PC-9 (cell line): ENCODE measurements at regions of chr7 and their contacts with region 1.

Region 1: GRCh38 chr7:127585044-127585953 is at the start of gene GCC1:
- DNase-seq: peak; percentile 69 to 96
- H3K4me3 ChIP-seq: peak within 1 kb of the TSS; percentile 87
- H3K27ac ChIP-seq: peak within 1 kb of the TSS; percentile 52
- H3K4me1 ChIP-seq: peaks cover 31% of the 10 kb centered on the region
- H3K27me3 ChIP-seq: no peaks in the 10 kb centered on the region
- CTCF ChIP-seq: no peak
- total RNA-seq, gene GCC1: 25.2 and 27.0 TPM in 2 replicates

Region 2: DNA sequence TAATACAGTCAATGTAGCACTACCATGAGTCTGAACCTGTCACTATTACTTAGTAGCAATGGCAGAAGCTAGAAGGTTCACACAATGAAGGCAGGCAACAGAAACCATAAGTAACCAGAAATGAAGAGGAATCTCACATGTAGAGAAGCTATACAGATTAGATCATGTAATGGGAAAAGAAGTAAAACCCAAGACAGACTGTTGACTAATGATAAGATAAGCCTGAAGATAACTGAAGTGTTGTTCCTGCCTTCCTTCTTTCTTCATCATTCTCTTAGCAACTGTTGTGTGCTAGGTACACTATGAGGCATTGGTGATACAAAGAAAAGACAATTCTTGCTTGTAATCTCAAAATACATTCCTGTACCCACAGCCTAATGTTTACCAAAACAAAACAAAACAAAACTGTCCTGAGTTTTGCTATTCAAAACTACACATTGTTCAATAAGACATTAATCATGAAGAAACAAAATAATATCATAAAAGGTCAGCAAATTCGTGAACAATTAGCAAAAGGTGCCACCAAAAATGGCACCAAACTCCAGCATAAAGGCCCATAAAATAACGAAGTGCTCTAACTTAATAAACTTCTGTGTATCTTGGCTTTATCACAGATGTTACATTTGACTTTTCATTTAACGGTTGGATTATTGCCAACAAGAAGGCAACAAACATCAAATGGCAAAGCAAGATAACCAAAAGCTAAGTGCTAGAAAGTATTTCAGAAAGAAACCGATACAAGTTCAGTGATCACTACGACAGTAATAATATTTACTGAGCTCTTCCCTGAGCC is 219.9 kb before region 1 on chr7:
- CTCF ChIA-PET with region 1: no interaction called
- POLR2A ChIA-PET with region 1: no interaction called
- intact Hi-C with region 1: no loop called
- DNase-seq: no peak
- H3K4me3 ChIP-seq: no peak overlapping the region
- H3K27ac ChIP-seq: no peak overlapping the region
- H3K4me1 ChIP-seq: no peaks in the 10 kb centered on the region
- H3K27me3 ChIP-seq: no peaks in the 10 kb centered on the region
- CTCF ChIP-seq: no peak

Region 3: GRCh38 chr7:127392566-127393367 is 192.5 kb before region 1 on chr7 and contains the start of gene ZNF800:
- CTCF ChIA-PET with region 1: interaction called, 10 read pairs
- POLR2A ChIA-PET with region 1: interaction called, 7 read pairs
- intact Hi-C with region 1: loop called (anchors 2 kb)
- DNase-seq: peak; percentile 58 to 90
- H3K4me3 ChIP-seq: peak within 1 kb of the TSS; percentile 99
- H3K27ac ChIP-seq: peak within 1 kb of the TSS; percentile 54
- H3K4me1 ChIP-seq: peaks cover 22% of the 10 kb centered on the region
- H3K27me3 ChIP-seq: no peaks in the 10 kb centered on the region
- CTCF ChIP-seq: no peak
- total RNA-seq, gene ZNF800: 32.4 and 32.6 TPM in 2 replicates

Region 4: GRCh38 chr7:127525866-127526480 is 59.3 kb before region 1 on chr7:
- CTCF ChIA-PET with region 1: no interaction called
- POLR2A ChIA-PET with region 1: no interaction called
- intact Hi-C with region 1: no loop called
- DNase-seq: no peak
- H3K4me3 ChIP-seq: no peak overlapping the region
- H3K27ac ChIP-seq: no peak overlapping the region
- H3K4me1 ChIP-seq: no peaks in the 10 kb centered on the region
- H3K27me3 ChIP-seq: peaks cover 19% of the 10 kb centered on the region; the same call in 1 of the 2 replicates
- CTCF ChIP-seq: no peak

Region 5: DNA sequence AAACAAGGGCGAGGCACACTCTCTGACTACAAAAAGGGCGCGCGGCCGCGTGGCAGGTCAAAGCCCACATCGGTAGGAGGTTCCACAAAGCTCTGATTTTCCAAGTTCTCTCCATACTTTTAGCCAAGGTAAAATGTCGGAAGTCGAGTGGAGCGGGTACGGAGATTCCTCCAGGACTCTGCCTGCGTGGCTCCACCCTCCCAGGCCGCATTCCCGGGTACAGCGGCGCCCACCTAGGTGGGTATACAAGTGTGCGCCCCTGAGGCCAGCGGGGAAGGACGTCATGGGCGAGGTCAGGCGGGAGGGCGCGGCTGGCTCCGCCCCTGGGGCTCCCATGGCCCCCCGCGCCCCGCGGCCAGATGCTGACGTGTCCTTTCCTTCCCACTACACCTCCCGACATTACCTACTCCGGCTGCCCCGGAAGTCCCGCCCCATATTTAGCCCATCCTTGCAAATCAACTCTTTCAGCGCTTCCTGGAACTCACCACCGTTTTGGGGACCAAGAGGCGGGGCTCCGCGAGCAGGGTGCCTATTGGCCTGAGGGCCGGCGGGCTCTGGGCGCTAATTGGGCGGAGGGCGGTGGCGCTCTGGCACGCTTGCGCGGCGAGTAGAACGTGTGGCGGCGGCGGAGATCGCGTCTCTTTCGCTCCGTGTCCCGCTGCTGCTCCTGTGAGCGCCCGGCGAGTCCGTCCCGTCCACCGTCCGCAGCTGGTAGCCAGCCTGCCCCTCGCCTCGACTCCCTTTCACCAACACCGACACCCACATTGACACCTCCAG is 66.4 kb after region 1 on chr7 and contains the start of gene SND1:
- CTCF ChIA-PET with region 1: no interaction called
- POLR2A ChIA-PET with region 1: no interaction called
- intact Hi-C with region 1: loop called (anchors 1 kb)
- DNase-seq: peak; percentile 98 to 100
- H3K4me3 ChIP-seq: peak within 1 kb of the TSS; percentile 86
- H3K27ac ChIP-seq: peak within 1 kb of the TSS; percentile 90
- H3K4me1 ChIP-seq: peaks cover 27% of the 10 kb centered on the region
- H3K27me3 ChIP-seq: no peaks in the 10 kb centered on the region
- CTCF ChIP-seq: no peak
- total RNA-seq, gene SND1: 219 and 273 TPM in 2 replicates

Region 6: GRCh38 chr7:127683776-127684681 is 98.7 kb after region 1 on chr7:
- CTCF ChIA-PET with region 1: interaction called, 11 read pairs
- POLR2A ChIA-PET with region 1: no interaction called
- intact Hi-C with region 1: no loop called
- DNase-seq: no peak
- H3K4me3 ChIP-seq: no peak overlapping the region
- H3K27ac ChIP-seq: no peak overlapping the region
- H3K4me1 ChIP-seq: no peaks in the 10 kb centered on the region
- H3K27me3 ChIP-seq: no peaks in the 10 kb centered on the region
- CTCF ChIP-seq: no peak

Region 7: GRCh38 chr7:127911968-127912511 is 326.7 kb after region 1 on chr7:
- CTCF ChIA-PET with region 1: no interaction called
- POLR2A ChIA-PET with region 1: no interaction called
- intact Hi-C with region 1: no loop called
- DNase-seq: no peak
- H3K4me3 ChIP-seq: no peak overlapping the region
- H3K27ac ChIP-seq: no peak overlapping the region
- H3K4me1 ChIP-seq: no peaks in the 10 kb centered on the region
- H3K27me3 ChIP-seq: no peaks in the 10 kb centered on the region
- CTCF ChIP-seq: no peak

Region 8: DNA sequence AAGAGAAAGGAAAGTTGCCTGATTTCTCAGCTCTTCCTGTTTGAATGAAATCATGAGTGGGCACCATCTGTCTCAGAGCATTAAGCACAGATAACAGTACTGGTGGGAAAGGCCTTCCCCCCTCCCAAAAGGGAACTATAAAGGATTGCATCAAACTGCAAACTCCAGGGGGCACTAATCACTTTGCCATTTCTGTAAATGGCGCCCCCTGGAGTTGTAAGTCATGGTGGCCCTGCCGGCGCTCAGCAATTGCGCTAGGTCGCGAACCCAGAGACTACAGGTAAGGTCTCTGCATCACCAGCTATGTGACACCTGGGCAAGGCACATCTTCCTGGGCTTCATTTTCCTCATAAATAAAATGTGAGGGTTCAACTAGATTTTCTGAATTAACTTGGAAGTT is 434.9 kb after region 1 on chr7:
- CTCF ChIA-PET with region 1: no interaction called
- POLR2A ChIA-PET with region 1: interaction called, 3 read pairs
- intact Hi-C with region 1: loop called (anchors 5 kb)
- DNase-seq: no peak
- H3K4me3 ChIP-seq: no peak overlapping the region
- H3K27ac ChIP-seq: peak overlapping the region; percentile 99
- H3K4me1 ChIP-seq: peaks cover 47% of the 10 kb centered on the region
- H3K27me3 ChIP-seq: no peaks in the 10 kb centered on the region
- CTCF ChIP-seq: no peak; the same call in 1 of the 2 replicates

Region 9: GRCh38 chr7:128381161-128381821 is 796.0 kb after region 1 on chr7:
- CTCF ChIA-PET with region 1: no interaction called
- POLR2A ChIA-PET with region 1: interaction called, 16 read pairs
- intact Hi-C with region 1: no loop called
- DNase-seq: peak; percentile 27 to 83
- H3K4me3 ChIP-seq: no peak overlapping the region
- H3K27ac ChIP-seq: no peak overlapping the region
- H3K4me1 ChIP-seq: peaks cover 49% of the 10 kb centered on the region
- H3K27me3 ChIP-seq: no peaks in the 10 kb centered on the region
- CTCF ChIP-seq: peak; percentile 81